Panc1 (cell line): ENCODE measurements at regions of chr3 and their contacts with region 1.

Region 1: GRCh38 chr3:177314897-177315296 is 117.6 kb upstream of the TBL1XR1 start:
- DNase-seq: no peak
- ATAC-seq: no peak
- H3K4me3 ChIP-seq: no peak overlapping the region
- H3K27ac ChIP-seq: peak overlapping the region; percentile 11; the same call in 1 of the 2 replicates
- H3K4me1 ChIP-seq: no peaks in the 10 kb centered on the region
- H3K27me3 ChIP-seq: no peaks in the 10 kb centered on the region
- CTCF ChIP-seq: no peak

Region 2: DNA sequence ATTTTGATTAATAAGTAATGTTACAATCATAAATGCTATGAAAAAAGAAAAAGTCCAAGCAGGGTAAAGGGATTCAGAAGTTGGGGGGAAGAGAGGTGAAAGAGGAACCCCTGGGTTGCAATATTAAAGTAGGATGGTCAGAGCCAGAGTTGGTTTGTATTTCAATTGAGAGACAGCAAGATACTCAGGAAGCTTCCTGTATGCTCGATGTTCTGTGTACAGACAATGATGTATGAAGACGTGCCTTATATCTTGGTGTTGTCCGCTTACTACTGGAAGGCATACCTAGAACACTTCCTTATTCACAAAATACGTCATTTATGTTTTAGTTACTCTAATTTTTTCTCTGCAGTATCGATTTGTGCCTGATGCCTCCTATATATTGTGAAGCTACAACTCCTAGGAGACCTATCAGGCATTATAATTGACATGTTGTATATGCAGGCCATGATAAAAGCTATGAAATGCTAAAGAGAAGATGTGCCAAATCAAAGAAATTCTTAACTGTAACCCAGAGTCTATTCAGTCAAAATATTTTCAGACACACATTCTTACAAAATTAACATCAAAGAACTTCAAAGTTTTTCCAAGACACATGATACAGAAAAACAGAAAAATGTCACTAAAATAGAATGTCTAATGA is 205.1 kb before region 1 on chr3:
- CTCF ChIA-PET with region 1: no interaction called
- POLR2A ChIA-PET with region 1: no interaction called
- in situ Hi-C with region 1: no loop called
- intact Hi-C with region 1: no loop called
- DNase-seq: no peak
- ATAC-seq: no peak
- H3K4me3 ChIP-seq: no peak overlapping the region
- H3K27ac ChIP-seq: peak overlapping the region; percentile 52; the same call in 1 of the 2 replicates
- H3K4me1 ChIP-seq: peaks cover 61% of the 10 kb centered on the region
- H3K27me3 ChIP-seq: no peaks in the 10 kb centered on the region
- CTCF ChIP-seq: no peak

Region 3: GRCh38 chr3:177441813-177442646 is 127.1 kb after region 1 on chr3:
- CTCF ChIA-PET with region 1: no interaction called
- POLR2A ChIA-PET with region 1: no interaction called
- in situ Hi-C with region 1: no loop called
- intact Hi-C with region 1: no loop called
- DNase-seq: no peak
- ATAC-seq: no peak
- H3K4me3 ChIP-seq: no peak overlapping the region
- H3K27ac ChIP-seq: peak overlapping the region; percentile 79
- H3K4me1 ChIP-seq: peaks cover 12% of the 10 kb centered on the region; the same call in 1 of the 2 replicates
- H3K27me3 ChIP-seq: no peaks in the 10 kb centered on the region
- CTCF ChIP-seq: no peak

Region 4: GRCh38 chr3:177893321-177893720 is 578.4 kb after region 1 on chr3:
- CTCF ChIA-PET with region 1: interaction called, 10 read pairs
- POLR2A ChIA-PET with region 1: no interaction called
- in situ Hi-C with region 1: no loop called
- intact Hi-C with region 1: no loop called
- DNase-seq: no peak
- ATAC-seq: no peak
- H3K4me3 ChIP-seq: no peak overlapping the region
- H3K27ac ChIP-seq: no peak overlapping the region; the same call in 1 of the 2 replicates
- H3K4me1 ChIP-seq: no peaks in the 10 kb centered on the region
- H3K27me3 ChIP-seq: no peaks in the 10 kb centered on the region
- CTCF ChIP-seq: no peak; the same call in 1 of the 2 replicates